GM12878 (cell line): ENCODE measurements at regions of chr5 and their contacts with region 1.

Region 1: DNA sequence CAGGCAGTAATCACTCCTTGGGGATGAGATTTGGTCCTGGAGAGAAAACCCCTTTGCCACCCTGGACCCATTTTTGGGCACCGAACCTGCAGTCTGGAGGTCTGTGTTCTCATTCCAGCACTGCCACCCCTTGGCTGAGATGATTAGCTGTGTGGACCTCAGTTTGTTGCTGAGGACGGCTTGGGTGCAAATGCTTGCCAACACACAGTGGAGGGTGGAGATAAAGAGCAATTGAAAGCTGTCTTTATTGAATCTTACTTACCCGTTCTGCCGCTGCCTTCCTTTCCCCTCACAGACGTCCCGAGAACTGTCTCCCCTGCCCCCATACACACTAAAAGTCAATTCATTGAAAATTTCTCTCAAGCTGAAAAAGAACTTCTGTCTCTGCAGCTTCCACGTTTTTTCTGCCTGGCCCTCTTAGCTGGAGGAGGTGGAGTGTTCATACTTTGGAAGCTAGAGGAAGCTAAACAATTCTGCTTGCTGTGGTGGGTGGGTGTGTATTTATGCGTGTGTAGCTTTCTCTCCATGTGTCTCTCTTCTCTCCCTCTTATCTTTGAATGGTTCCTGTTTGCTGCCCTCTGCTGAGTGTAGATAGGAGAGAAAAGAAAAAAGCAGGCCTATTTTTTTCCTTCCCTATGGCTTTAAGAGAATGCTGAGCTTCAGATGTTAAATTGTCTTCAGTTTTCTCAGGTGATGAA is 6.6 kb downstream of the GALNT10 start:
- DNase-seq: no peak
- ATAC-seq: peak; percentile 35
- H3K4me3 ChIP-seq: no peak overlapping the region
- H3K27ac ChIP-seq: no peak overlapping the region
- H3K4me1 ChIP-seq: peaks cover 32% of the 10 kb centered on the region
- H3K27me3 ChIP-seq: no peaks in the 10 kb centered on the region
- CTCF ChIP-seq: peak in 2 of 3 experiments; percentile 8 to 35; a peak in 3 of 6 replicates
- EP300 ChIP-seq: no peak
- POLR2A ChIP-seq: no peak
- RAD21 ChIP-seq: peak; percentile 28; the same call in 1 of the 2 replicates

Region 2: GRCh38 chr5:154179846-154180710 is 17.0 kb before region 1 on chr5:
- CTCF ChIA-PET with region 1: interaction called, 18 read pairs
- POLR2A ChIA-PET with region 1: no interaction called
- RAD21 ChIA-PET with region 1: interaction called, 5 read pairs
- SMC1A ChIA-PET with region 1: interaction called, 6 read pairs
- in situ Hi-C with region 1: no loop called
- intact Hi-C with region 1: no loop called
- DNase-seq: no peak
- ATAC-seq: peak; percentile 99
- H3K4me3 ChIP-seq: no peak overlapping the region
- H3K27ac ChIP-seq: no peak overlapping the region
- H3K4me1 ChIP-seq: no peaks in the 10 kb centered on the region
- H3K27me3 ChIP-seq: no peaks in the 10 kb centered on the region
- CTCF ChIP-seq: peak; percentile 74 to 84 (median 80)
- EP300 ChIP-seq: no peak
- POLR2A ChIP-seq: no peak
- RAD21 ChIP-seq: peak; percentile 89

Region 3: GRCh38 chr5:154214371-154215106 is 17.4 kb after region 1 on chr5:
- CTCF ChIA-PET with region 1: interaction called, 9 read pairs
- POLR2A ChIA-PET with region 1: interaction called, 4 read pairs
- RAD21 ChIA-PET with region 1: interaction called, 4 read pairs
- SMC1A ChIA-PET with region 1: interaction called, 16 read pairs
- in situ Hi-C with region 1: no loop called
- intact Hi-C with region 1: no loop called
- DNase-seq: no peak
- ATAC-seq: peak; percentile 85
- H3K4me3 ChIP-seq: 0 out of 2 replicates have a peak overlapping the region, but pooled peaks have one; percentile 3
- H3K27ac ChIP-seq: peak overlapping the region; percentile 37
- H3K4me1 ChIP-seq: peaks cover 10% of the 10 kb centered on the region
- H3K27me3 ChIP-seq: no peaks in the 10 kb centered on the region
- CTCF ChIP-seq: no peak
- EP300 ChIP-seq: peak in 1 of 2 experiments; percentile 27; a peak in 1 of 4 replicates
- POLR2A ChIP-seq: no peak
- RAD21 ChIP-seq: no peak

Region 4: DNA sequence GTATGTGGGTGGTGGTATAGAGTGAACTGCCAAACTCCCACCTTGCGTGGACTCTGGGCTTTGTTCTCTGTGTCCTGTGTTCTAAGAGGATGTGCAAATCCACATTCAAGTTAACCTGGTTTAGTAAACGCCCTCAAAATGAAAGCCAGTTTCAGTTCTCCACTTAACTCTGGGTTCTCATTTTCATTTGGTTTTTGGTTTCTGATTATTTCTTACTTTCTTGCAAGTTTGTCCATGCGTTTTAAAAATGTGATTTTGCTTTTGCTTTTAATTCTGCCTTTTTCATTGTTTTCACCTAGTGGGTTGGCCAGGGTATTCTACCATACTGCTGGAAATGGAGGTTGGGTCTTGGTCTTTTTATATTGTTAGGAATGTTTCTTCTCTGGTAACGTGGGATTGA is 31.6 kb after region 1 on chr5:
- CTCF ChIA-PET with region 1: interaction called, 15 read pairs
- POLR2A ChIA-PET with region 1: interaction called, 6 read pairs
- RAD21 ChIA-PET with region 1: interaction called, 11 read pairs
- SMC1A ChIA-PET with region 1: interaction called, 50 read pairs
- in situ Hi-C with region 1: no loop called
- intact Hi-C with region 1: loop called (anchors 5 kb)
- DNase-seq: peak; percentile 72
- ATAC-seq: peak; percentile 98
- H3K4me3 ChIP-seq: peak overlapping the region; percentile 50; the same call in 1 of the 2 replicates
- H3K27ac ChIP-seq: peak overlapping the region; percentile 75
- H3K4me1 ChIP-seq: peaks cover 23% of the 10 kb centered on the region
- H3K27me3 ChIP-seq: no peaks in the 10 kb centered on the region
- CTCF ChIP-seq: no peak
- EP300 ChIP-seq: peak; percentile 22 to 62; a peak in 2 of 4 replicates
- POLR2A ChIP-seq: no peak
- RAD21 ChIP-seq: no peak

Region 5: GRCh38 chr5:154287136-154287535 is 90.0 kb after region 1 on chr5:
- CTCF ChIA-PET with region 1: interaction called, 6 read pairs
- POLR2A ChIA-PET with region 1: interaction called, 4 read pairs
- RAD21 ChIA-PET with region 1: interaction called, 4 read pairs
- SMC1A ChIA-PET with region 1: interaction called, 11 read pairs
- in situ Hi-C with region 1: no loop called
- intact Hi-C with region 1: loop called (anchors 5 kb)
- DNase-seq: no peak
- ATAC-seq: no peak
- H3K4me3 ChIP-seq: no peak overlapping the region
- H3K27ac ChIP-seq: no peak overlapping the region
- H3K4me1 ChIP-seq: peaks cover 32% of the 10 kb centered on the region
- H3K27me3 ChIP-seq: no peaks in the 10 kb centered on the region
- CTCF ChIP-seq: no peak
- EP300 ChIP-seq: no peak
- POLR2A ChIP-seq: no peak
- RAD21 ChIP-seq: no peak